ENCODE measurements at regions of chr1 and their contacts with region 1.

Region 1: GRCh38 chr1:155934097-155934935 is at the start of gene KHDC4:
- DNase-seq: peak; percentile 98
- ATAC-seq: peak; percentile 95
- H3K4me3 ChIP-seq: peak within 1 kb of the TSS; percentile 83 to 98 (median 97)
- H3K27ac ChIP-seq: peak within 1 kb of the TSS; percentile 96
- H3K4me1 ChIP-seq: peaks cover 56% of the 10 kb centered on the region
- H3K27me3 ChIP-seq: no peaks in the 10 kb centered on the region; a peak in 1 of 5 replicates
- CTCF ChIP-seq: peak; percentile 27; the same call in 1 of the 2 replicates
- EP300 ChIP-seq: peak in 1 of 2 experiments; percentile 17; a peak in 1 of 4 replicates
- POLR2A ChIP-seq: peak; percentile 95 to 97
- RAD21 ChIP-seq: peak; percentile 34; the same call in 1 of the 2 replicates
- total RNA-seq, gene KHDC4: 15.9 and 33.5 TPM in 2 replicates

Region 2: DNA sequence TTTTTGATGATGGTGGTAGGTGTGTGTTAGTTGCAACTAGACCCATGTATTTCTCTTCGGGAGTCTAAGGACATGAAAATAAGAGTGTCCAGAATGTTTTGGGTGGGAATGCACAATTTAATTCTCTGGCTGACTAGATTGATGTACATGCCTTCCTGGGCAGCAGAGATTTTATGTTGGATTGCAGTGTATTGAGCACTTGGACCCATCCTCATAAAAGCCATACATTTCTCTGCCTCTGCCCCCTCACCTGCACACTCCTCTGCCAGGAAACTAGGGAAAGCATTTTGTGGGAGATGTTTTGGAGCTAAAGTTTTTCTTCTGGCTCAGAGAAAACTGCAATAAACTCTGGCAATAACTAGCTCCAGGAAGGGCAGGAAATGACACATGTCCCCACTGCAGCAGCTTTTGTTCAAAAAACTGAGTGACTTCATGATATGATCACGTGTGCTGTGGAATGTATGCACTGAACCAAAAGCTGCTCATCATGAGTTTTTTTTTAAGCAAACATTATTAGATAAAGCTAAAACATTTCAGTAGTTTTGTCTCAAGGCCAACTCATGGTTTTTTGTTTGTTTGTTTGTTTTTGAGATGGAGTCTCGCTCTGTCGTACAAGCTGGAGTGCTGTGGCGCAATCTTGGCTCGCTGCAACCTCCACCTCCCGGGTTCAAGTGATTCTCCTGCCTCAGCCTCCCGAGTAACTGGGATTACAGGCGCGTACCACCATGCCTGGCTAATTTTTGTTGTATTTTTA is 40.8 kb before region 1 on chr1:
- CTCF ChIA-PET with region 1: no interaction called
- POLR2A ChIA-PET with region 1: interaction called, 12 read pairs
- in situ Hi-C with region 1: no loop called
- intact Hi-C with region 1: no loop called
- DNase-seq: peak; percentile 85
- ATAC-seq: peak; percentile 85
- H3K4me3 ChIP-seq: no peak overlapping the region
- H3K27ac ChIP-seq: peak overlapping the region; percentile 49
- H3K4me1 ChIP-seq: peaks cover 33% of the 10 kb centered on the region
- H3K27me3 ChIP-seq: no peaks in the 10 kb centered on the region
- CTCF ChIP-seq: no peak
- EP300 ChIP-seq: peak in 1 of 2 experiments; percentile 42; a peak in 1 of 4 replicates
- POLR2A ChIP-seq: peak in 1 of 2 experiments; percentile 25; a peak in 1 of 4 replicates
- RAD21 ChIP-seq: no peak

Region 3: DNA sequence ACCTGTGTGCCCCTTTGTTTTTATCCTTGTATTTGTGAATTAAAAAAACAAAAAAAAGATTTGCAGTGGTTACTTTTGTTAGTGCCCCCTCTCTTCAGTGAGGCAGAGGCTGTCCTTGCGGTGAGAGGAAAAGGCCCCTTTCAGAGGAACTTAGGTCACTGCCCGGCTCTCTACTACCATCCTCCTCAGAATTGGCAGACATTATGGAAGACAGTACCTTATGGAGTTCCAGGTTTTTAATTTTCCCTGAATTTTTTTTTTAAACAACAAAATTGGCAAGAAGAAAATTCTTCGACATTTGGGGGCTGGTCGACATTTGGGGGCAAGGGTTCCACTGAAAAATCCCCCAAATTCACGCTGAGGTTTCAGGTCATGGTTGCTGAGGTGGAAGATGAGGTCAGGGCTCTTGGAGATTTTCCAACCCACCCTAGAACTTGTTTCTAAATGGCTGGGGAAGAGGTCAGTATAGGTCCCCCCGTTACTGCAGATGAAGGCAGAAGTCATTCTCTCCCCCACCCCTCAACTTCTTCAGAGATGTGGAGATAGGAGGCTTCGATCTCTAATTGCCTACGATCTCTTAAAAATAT is 12.4 kb after region 1 on chr1:
- CTCF ChIA-PET with region 1: no interaction called
- POLR2A ChIA-PET with region 1: interaction called, 55 read pairs
- in situ Hi-C with region 1: no loop called
- intact Hi-C with region 1: no loop called
- DNase-seq: no peak
- ATAC-seq: no peak
- H3K4me3 ChIP-seq: no peak overlapping the region
- H3K27ac ChIP-seq: peak overlapping the region; percentile 86
- H3K4me1 ChIP-seq: peaks cover 50% of the 10 kb centered on the region
- H3K27me3 ChIP-seq: no peaks in the 10 kb centered on the region
- CTCF ChIP-seq: no peak
- EP300 ChIP-seq: no peak
- POLR2A ChIP-seq: no peak
- RAD21 ChIP-seq: no peak

Region 4: DNA sequence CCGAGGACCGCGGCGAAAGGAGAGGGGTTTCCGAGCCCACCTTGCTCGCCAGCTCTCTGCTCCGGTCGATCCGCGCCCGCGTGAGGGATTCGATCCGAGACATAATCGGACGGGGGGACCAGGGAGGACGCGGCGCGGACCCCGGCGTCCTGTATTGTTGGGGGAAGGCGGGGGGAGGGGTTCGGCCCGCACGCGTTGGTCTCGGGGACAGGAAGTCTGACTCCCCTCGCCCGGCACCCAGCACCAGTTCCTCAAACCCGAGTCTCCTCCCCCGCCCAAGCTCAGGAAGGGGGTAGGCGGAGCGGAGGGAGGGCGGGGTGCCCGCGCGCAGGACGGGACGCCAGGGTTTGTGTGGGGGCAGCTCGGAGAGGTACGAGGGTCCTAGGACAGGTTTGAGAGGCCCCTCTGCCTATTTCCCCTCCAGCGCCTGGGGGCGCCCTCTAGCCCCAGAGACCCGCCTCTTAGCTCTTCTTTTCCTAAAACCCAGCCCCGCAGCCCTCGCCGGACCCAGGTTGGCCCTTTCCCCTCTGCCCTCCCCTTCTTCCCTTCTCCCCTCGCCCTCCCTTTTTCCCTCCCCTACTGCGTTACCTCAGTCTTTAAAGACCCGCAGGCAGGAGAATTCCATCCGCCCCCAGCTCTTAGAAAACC is 44.1 kb after region 1 on chr1 and contains the start of gene ARHGEF2:
- CTCF ChIA-PET with region 1: interaction called, 4 read pairs
- POLR2A ChIA-PET with region 1: interaction called, 48 read pairs
- in situ Hi-C with region 1: loop called (anchors 10 kb)
- intact Hi-C with region 1: no loop called
- DNase-seq: no peak
- ATAC-seq: peak; percentile 47
- H3K4me3 ChIP-seq: peak within 1 kb of the TSS; percentile 85 to 92 (median 90)
- H3K27ac ChIP-seq: peak within 1 kb of the TSS; percentile 56
- H3K4me1 ChIP-seq: peaks cover 83% of the 10 kb centered on the region
- H3K27me3 ChIP-seq: no peaks in the 10 kb centered on the region; a peak in 1 of 5 replicates
- CTCF ChIP-seq: peak; percentile 63
- EP300 ChIP-seq: no peak
- POLR2A ChIP-seq: peak in 1 of 2 experiments; percentile 60; a peak in 2 of 4 replicates
- RAD21 ChIP-seq: no peak
- total RNA-seq, gene ARHGEF2: 15.0 and 16.1 TPM in 2 replicates

Region 5: GRCh38 chr1:156033011-156033410 is 98.7 kb after region 1 on chr1:
- CTCF ChIA-PET with region 1: no interaction called
- POLR2A ChIA-PET with region 1: no interaction called
- in situ Hi-C with region 1: no loop called
- intact Hi-C with region 1: no loop called
- DNase-seq: no peak
- ATAC-seq: no peak
- H3K4me3 ChIP-seq: no peak overlapping the region
- H3K27ac ChIP-seq: no peak overlapping the region
- H3K4me1 ChIP-seq: no peaks in the 10 kb centered on the region
- H3K27me3 ChIP-seq: no peaks in the 10 kb centered on the region
- CTCF ChIP-seq: no peak
- EP300 ChIP-seq: no peak
- POLR2A ChIP-seq: no peak
- RAD21 ChIP-seq: no peak

Region 6: GRCh38 chr1:156067262-156067661 is 132.9 kb after region 1 on chr1:
- CTCF ChIA-PET with region 1: interaction called, 8 read pairs
- POLR2A ChIA-PET with region 1: interaction called, 7 read pairs
- in situ Hi-C with region 1: no loop called
- intact Hi-C with region 1: loop called (anchors 1 kb)
- DNase-seq: no peak
- ATAC-seq: no peak
- H3K4me3 ChIP-seq: no peak overlapping the region
- H3K27ac ChIP-seq: no peak overlapping the region
- H3K4me1 ChIP-seq: peaks cover 47% of the 10 kb centered on the region
- H3K27me3 ChIP-seq: no peaks in the 10 kb centered on the region
- CTCF ChIP-seq: no peak
- EP300 ChIP-seq: no peak
- POLR2A ChIP-seq: no peak
- RAD21 ChIP-seq: no peak